Sigmoid colon (tissue), 7 donors: ENCODE measurements at regions of chr17 and their contacts with region 1.

Region 1: DNA sequence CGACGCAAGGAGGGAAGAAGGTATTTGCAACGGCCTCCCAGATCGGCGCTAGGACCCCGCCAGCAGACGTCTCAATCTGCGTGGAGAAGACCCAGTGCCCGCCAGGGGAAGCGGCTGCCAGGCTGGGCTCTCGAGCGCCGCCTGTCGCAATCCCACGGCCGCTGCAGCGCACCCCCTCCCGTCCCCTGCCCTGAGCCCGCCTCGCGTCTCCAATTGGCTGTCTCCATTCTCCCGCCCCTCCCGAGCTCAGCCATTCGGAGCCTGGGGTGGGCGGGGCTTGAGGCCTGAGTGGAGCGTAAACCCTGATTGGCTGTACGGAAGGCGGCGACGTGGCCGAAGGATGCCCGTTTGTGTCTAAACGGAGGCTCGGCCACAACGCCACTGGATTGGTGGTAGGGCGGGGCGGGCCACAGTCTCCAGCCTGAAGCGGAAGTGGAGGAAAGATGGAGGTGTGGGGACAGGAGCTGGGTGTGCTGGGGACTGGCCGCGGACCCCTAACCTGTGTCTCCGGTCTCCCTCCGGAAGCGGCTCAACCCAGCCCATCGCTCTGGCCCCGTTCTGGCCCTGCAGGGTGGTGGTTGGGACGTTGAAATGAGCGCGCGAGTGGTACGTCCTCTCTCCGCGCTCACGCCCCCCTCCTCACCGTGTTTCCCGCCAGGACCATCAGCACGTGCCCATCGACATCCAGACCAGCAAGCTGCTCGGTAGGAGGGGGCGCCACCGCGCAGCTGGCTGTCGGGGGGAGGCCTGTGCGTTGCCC is at the start of gene CDK5RAP3:
- DNase-seq: peak; percentile 100
- H3K4me3 ChIP-seq: peak within 1 kb of the TSS; percentile 72 to 99 (median 94)
- H3K27ac ChIP-seq: peak within 1 kb of the TSS; percentile 77 to 90 (median 87)
- H3K4me1 ChIP-seq: peaks cover 0 to 26% (median 17%) of the 10 kb centered on the region in 4 donors
- H3K27me3 ChIP-seq: no peaks in the 10 kb centered on the region
- CTCF ChIP-seq: peak; percentile 89 to 99 (median 95)
- EP300 ChIP-seq: no peak
- POLR2A ChIP-seq: peak in 1 of 2 donors; percentile 75
- total RNA-seq, gene CDK5RAP3: 68.5 to 168 (median 73.0) TPM

Region 2: GRCh38 chr17:47840740-47841603 is 129.9 kb before region 1 on chr17 and contains the start of gene SCRN2:
- intact Hi-C with region 1: loop called (anchors 1 kb)
- DNase-seq: peak; percentile 94
- H3K4me3 ChIP-seq: peak within 1 kb of the TSS; percentile 71 to 91 (median 80)
- H3K27ac ChIP-seq: peak within 1 kb of the TSS; percentile 63 to 80 (median 76)
- H3K4me1 ChIP-seq: peaks cover 0 to 22% (median 18%) of the 10 kb centered on the region in 4 donors
- H3K27me3 ChIP-seq: peaks cover 5 to 11% (median 9%) of the 10 kb centered on the region in 3 donors
- CTCF ChIP-seq: peak; percentile 96 to 99 (median 98)
- EP300 ChIP-seq: no peak
- POLR2A ChIP-seq: no peak
- total RNA-seq, gene SCRN2: 22.5 to 28.8 (median 23.4) TPM

Region 3: GRCh38 chr17:47895856-47896671 is 74.8 kb before region 1 on chr17 and contains the start of gene SP2:
- intact Hi-C with region 1: loop called (anchors 1 kb)
- DNase-seq: peak; percentile 100
- H3K4me3 ChIP-seq: peak within 1 kb of the TSS; percentile 76 to 93 (median 86)
- H3K27ac ChIP-seq: peak within 1 kb of the TSS; percentile 98 to 99 (median 98)
- H3K4me1 ChIP-seq: peaks cover 0 to 33% (median 25%) of the 10 kb centered on the region in 4 donors
- H3K27me3 ChIP-seq: no peaks in the 10 kb centered on the region
- CTCF ChIP-seq: no peak
- EP300 ChIP-seq: no peak
- POLR2A ChIP-seq: peak; percentile 69 to 70
- total RNA-seq, gene SP2: 3.0 to 8.3 (median 5.6) TPM

Region 4: GRCh38 chr17:47941236-47941994 is 29.5 kb before region 1 on chr17 and contains the start of gene PNPO:
- intact Hi-C with region 1: loop called (anchors 2 kb)
- DNase-seq: peak; percentile 98
- H3K4me3 ChIP-seq: peak within 1 kb of the TSS; percentile 53 to 92 (median 77)
- H3K27ac ChIP-seq: peak within 1 kb of the TSS; percentile 79 to 86 (median 82)
- H3K4me1 ChIP-seq: peaks cover 0 to 26% (median 17%) of the 10 kb centered on the region in 4 donors
- H3K27me3 ChIP-seq: no peaks in the 10 kb centered on the region
- CTCF ChIP-seq: peak in 1 of 4 experiments; percentile 33
- EP300 ChIP-seq: no peak
- POLR2A ChIP-seq: peak in 1 of 2 donors; percentile 38
- total RNA-seq, gene PNPO: 14.3 to 16.5 (median 15.2) TPM

Region 5: DNA sequence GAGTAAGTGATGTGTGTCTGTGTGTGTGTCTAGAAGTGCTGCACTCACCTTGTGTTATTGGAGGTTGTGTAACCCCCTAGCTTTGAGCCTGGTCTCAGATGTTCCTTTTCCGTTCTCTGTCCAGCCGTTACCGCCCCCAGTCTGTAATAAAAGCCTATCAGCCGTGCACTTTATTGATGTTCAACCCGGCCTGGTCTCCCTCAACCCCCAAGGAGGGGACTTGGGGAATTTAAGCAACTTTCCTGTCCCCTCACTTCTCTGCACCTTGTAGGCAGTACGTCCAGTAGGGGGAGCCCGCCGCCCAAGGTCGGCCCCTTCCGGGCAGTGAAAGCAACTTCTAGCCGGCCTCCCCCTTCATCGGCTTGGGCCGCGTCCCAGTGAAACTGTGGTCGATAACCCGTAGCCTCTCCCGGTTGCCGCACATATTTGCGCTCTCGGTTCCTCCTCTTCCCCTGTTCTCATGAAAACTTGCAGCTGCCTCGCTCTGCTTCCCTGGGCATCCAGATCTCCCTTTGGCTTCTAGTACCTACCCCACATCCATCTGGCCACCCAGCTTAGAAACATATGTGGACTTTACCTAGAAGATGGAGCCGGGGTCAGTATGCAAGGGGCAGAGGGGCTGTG is 21.6 kb before region 1 on chr17:
- intact Hi-C with region 1: loop called (anchors 1 kb)
- DNase-seq: peak; percentile 92
- H3K4me3 ChIP-seq: peak overlapping the region; percentile 8 to 38 (median 32)
- H3K27ac ChIP-seq: peak overlapping the region; percentile 62 to 72 (median 66)
- H3K4me1 ChIP-seq: peaks cover 0 to 24% (median 15%) of the 10 kb centered on the region in 4 donors
- H3K27me3 ChIP-seq: no peaks in the 10 kb centered on the region
- CTCF ChIP-seq: peak; percentile 76 to 92 (median 87)
- EP300 ChIP-seq: no peak
- POLR2A ChIP-seq: peak in 1 of 2 donors; percentile 4

Region 6: GRCh38 chr17:48074315-48075081 is 103.6 kb after region 1 on chr17:
- intact Hi-C with region 1: loop called (anchors 10 kb)
- DNase-seq: peak; percentile 86
- H3K4me3 ChIP-seq: no peak overlapping the region
- H3K27ac ChIP-seq: peak overlapping the region in 3 of 4 donors; percentile 19 to 45 (median 39)
- H3K4me1 ChIP-seq: peaks cover 0 to 9% (median 3%) of the 10 kb centered on the region in 4 donors
- H3K27me3 ChIP-seq: no peaks in the 10 kb centered on the region
- CTCF ChIP-seq: peak; percentile 52 to 84 (median 74)
- EP300 ChIP-seq: no peak
- POLR2A ChIP-seq: no peak